ENCODE measurements at regions of chr6 and their contacts with region 1.

Region 1: GRCh38 chr6:153032255-153032882 is 29.9 kb upstream of the MTRF1L start:
- DNase-seq: peak; percentile 23
- H3K4me3 ChIP-seq: no peak overlapping the region
- H3K27ac ChIP-seq: no peak overlapping the region
- H3K4me1 ChIP-seq: no peaks in the 10 kb centered on the region
- CTCF ChIP-seq: peak; percentile 81

Region 2: GRCh38 chr6:152874846-152875568 is 157.4 kb before region 1 on chr6:
- CTCF ChIA-PET with region 1: no interaction called
- POLR2A ChIA-PET with region 1: no interaction called
- intact Hi-C with region 1: no loop called
- DNase-seq: no peak
- H3K4me3 ChIP-seq: no peak overlapping the region
- H3K27ac ChIP-seq: no peak overlapping the region
- H3K4me1 ChIP-seq: no peaks in the 10 kb centered on the region
- CTCF ChIP-seq: 0 out of 2 replicates have a peak, but pooled peaks have one; percentile 14

Region 3: DNA sequence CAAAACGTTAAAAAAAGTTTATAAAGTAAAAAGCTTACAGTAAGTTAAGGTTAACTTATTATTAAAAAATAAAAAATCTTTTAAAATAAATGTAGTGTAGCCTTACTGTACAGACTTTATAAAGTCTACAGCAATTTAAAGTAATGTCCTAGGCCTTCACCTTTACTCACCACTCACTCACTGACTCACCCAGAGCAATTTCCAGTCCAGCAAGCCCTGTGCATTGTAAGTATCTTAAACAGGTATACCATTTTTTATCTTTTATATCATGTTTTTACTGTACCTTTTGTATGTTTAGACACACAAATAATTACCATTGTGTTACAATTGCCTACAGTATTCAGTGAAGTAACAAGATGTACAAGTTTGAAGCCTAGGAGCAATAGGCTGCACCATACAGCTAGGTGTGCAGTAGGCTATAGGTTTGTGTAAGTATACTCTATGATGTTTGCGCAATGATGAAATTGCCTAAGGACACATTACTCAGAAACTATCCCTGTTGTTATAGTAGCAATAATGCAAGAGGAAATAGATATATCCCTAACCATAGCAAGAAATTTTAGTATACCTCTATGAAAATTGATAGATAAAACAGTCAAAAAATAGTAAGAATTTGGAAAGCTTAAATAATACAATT is 89.0 kb before region 1 on chr6:
- CTCF ChIA-PET with region 1: no interaction called
- POLR2A ChIA-PET with region 1: no interaction called
- intact Hi-C with region 1: no loop called
- DNase-seq: no peak
- H3K4me3 ChIP-seq: no peak overlapping the region
- H3K27ac ChIP-seq: no peak overlapping the region
- H3K4me1 ChIP-seq: no peaks in the 10 kb centered on the region
- CTCF ChIP-seq: no peak

Region 4: GRCh38 chr6:153312641-153313040 is 280.3 kb after region 1 on chr6:
- CTCF ChIA-PET with region 1: no interaction called
- POLR2A ChIA-PET with region 1: no interaction called
- intact Hi-C with region 1: loop called (anchors 5 kb)
- DNase-seq: peak; percentile 26
- H3K4me3 ChIP-seq: no peak overlapping the region
- H3K27ac ChIP-seq: no peak overlapping the region
- H3K4me1 ChIP-seq: no peaks in the 10 kb centered on the region
- CTCF ChIP-seq: peak; percentile 83

Region 5: GRCh38 chr6:153511896-153512496 is 479.6 kb after region 1 on chr6:
- CTCF ChIA-PET with region 1: no interaction called
- POLR2A ChIA-PET with region 1: no interaction called
- intact Hi-C with region 1: loop called (anchors 10 kb)
- DNase-seq: peak; percentile 45
- H3K4me3 ChIP-seq: no peak overlapping the region
- H3K27ac ChIP-seq: no peak overlapping the region
- H3K4me1 ChIP-seq: no peaks in the 10 kb centered on the region
- CTCF ChIP-seq: peak; percentile 78

Region 6: DNA sequence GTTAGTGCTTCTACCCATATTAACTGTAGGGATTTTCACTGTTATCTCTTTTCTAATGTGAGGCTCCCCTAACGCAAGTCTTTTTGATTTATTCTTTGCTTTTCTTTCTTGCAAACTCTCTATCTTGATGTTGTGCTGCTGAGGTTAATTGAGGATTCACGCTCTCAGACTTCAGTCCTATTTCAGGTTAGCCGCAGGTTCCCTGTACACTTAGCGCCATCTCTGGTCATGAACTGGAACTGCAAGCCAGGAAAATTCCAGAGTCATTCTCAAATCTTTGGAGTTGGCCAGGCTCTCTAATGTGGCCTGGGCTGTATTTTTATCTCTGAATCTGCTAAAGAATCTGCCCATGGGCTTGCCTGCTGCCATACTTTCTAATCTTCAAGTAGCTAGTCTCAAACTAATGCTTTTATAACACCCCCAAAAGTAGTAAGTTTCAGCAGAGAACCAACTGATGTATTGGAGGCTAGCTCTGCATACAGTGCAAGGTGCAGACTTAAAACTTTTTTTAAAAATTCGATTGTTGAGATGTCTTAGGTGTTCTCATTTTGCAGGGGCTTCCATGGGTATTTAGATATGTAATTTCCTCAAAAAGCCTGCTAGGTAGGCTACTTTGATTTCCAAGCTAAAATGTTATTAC is 915.6 kb after region 1 on chr6:
- CTCF ChIA-PET with region 1: no interaction called
- POLR2A ChIA-PET with region 1: no interaction called
- intact Hi-C with region 1: loop called (anchors 10 kb)
- DNase-seq: peak; percentile 16
- H3K4me3 ChIP-seq: no peak overlapping the region
- H3K27ac ChIP-seq: no peak overlapping the region
- H3K4me1 ChIP-seq: no peaks in the 10 kb centered on the region
- CTCF ChIP-seq: peak; percentile 92